A549 (cell line): ENCODE measurements at regions of chr2 and their contacts with region 1.

Region 1: GRCh38 chr2:224357098-224357901 is 44.6 kb downstream of the FAM124B start:
- DNase-seq: peak; percentile 47 to 69
- ATAC-seq: peak; percentile 82 to 88
- H3K4me3 ChIP-seq: no peak overlapping the region
- H3K27ac ChIP-seq: no peak overlapping the region
- H3K4me1 ChIP-seq: no peaks in the 10 kb centered on the region
- CTCF ChIP-seq: peak; percentile 91
- EP300 ChIP-seq: no peak
- POLR2A ChIP-seq: no peak
- RAD21 ChIP-seq: peak; percentile 93

Region 2: DNA sequence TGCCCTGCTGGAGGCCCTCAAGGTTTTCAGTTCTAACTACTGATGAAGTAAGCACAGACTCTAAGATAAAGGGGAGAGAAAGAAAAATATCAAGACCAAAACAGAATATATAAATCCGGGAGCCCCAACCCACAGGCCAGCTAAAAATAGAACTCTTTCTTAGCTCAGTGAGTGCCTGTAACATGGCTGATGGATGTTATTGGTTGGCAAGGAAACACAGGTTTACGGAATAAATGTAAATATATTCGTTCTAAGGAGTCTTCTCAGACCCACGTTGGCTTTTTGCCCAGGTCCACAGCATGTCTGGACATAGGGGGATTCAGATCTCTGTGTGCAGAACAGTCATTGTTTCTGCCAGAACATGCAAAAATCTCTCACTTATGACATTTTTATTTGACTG is 179.2 kb before region 1 on chr2:
- CTCF ChIA-PET with region 1: no interaction called
- POLR2A ChIA-PET with region 1: no interaction called
- DNase-seq: no peak
- ATAC-seq: no peak
- H3K4me3 ChIP-seq: no peak overlapping the region
- H3K27ac ChIP-seq: no peak overlapping the region
- H3K4me1 ChIP-seq: peaks cover 6% of the 10 kb centered on the region
- CTCF ChIP-seq: no peak
- EP300 ChIP-seq: no peak
- POLR2A ChIP-seq: no peak
- RAD21 ChIP-seq: no peak

Region 3: GRCh38 chr2:224369028-224369632 is 11.8 kb after region 1 on chr2:
- CTCF ChIA-PET with region 1: interaction called, 13 read pairs
- POLR2A ChIA-PET with region 1: no interaction called
- DNase-seq: peak; percentile 15 to 47
- ATAC-seq: peak; percentile 64 to 78; a peak in 3 of 6 replicates
- H3K4me3 ChIP-seq: no peak overlapping the region
- H3K27ac ChIP-seq: no peak overlapping the region
- H3K4me1 ChIP-seq: no peaks in the 10 kb centered on the region
- CTCF ChIP-seq: peak; percentile 84
- EP300 ChIP-seq: no peak
- POLR2A ChIP-seq: no peak
- RAD21 ChIP-seq: peak; percentile 64 to 74